Pancreas (tissue), 10 donors: ENCODE measurements at regions of chr13 and their contacts with region 1.

Region 1: DNA sequence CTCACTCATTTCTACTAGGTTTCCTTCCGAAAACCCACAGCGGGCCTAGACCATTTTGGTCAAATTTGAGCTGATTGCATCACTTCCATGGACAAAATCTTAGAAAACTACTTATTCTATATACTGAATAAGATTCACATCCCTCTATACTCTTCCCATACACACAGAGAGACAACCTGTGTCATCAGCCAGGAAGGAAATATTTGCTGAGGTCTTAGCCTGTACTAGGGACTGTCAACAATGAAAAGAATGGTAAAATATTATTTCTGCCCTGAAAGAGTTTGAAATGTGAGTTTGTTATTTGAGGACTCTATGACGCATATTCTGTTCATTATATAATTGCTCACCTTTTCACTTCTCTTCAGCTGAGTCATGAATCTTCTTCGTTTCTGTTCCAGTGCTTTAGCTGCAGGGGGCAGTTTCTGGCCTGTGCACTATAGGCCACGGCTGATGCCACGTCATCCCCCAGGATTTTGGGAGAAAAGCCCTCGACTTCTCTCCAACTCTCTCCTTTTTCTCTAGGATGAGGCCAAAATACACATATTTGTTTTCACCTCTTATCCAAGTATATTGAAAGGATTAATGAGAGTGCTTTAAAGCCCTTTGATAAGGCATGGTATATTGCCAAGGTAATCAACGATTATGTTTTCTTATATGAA is 47.7 kb downstream of the GSX1 start:
- DNase-seq: no peak
- ATAC-seq: peak; percentile 20 to 71 (median 68)
- H3K4me3 ChIP-seq: no peak overlapping the region
- H3K27ac ChIP-seq: no peak overlapping the region
- H3K4me1 ChIP-seq: no peaks in the 10 kb centered on the region
- H3K27me3 ChIP-seq: peaks cover 0 to 5% (median 0%) of the 10 kb centered on the region in 4 donors
- CTCF ChIP-seq: no peak

Region 2: DNA sequence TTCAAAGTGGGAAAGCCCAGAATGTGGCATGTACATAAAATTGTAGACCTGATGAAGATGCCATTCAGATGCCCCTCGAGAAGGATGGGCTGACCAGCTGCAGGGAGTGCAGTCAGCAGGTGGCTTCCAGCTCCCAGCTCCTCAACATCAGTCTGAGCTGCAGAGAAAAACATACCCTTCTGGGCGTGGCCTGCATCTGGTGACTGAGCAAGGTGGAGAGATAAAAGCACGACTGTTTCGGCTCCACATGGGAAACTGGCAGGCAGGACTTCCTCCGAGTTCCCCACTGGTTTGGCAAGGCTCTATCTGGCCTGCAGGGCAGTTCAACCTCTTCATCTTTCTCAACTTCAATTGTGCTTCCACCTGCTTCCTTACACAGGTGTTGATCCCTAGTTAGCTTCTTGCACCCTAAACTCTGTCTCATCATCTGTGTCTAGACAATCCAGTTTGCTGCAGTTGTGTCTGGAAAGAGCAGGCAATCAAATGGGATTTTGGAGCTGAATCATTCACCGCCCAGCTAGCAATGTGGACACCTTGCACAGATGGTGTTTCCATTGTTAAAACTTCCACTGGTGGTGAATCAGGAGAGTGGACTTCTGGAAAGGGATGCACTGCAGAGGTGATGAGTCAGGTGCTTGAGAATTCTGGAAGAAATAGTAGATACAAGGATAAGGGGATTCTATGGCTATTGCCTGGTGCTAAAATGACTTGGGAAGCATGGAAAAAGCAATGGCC is 161.5 kb before region 1 on chr13:
- intact Hi-C with region 1: loop called in 1 of 3 experiments (anchors 5 kb)
- DNase-seq: no peak
- ATAC-seq: no peak
- H3K4me3 ChIP-seq: no peak overlapping the region
- H3K27ac ChIP-seq: no peak overlapping the region
- H3K4me1 ChIP-seq: no peaks in the 10 kb centered on the region
- H3K27me3 ChIP-seq: no peaks in the 10 kb centered on the region
- CTCF ChIP-seq: no peak